ENCODE measurements at regions of chr13 and their contacts with region 1.

Region 1: GRCh38 chr13:95115525-95115924 is 185.7 kb downstream of the ABCC4 start:
- DNase-seq: no peak
- H3K4me3 ChIP-seq: peak overlapping the region in 1 of 3 experiments; percentile 13
- H3K27ac ChIP-seq: peak overlapping the region; percentile 65
- H3K4me1 ChIP-seq: peaks cover 43% of the 10 kb centered on the region
- H3K27me3 ChIP-seq: no peaks in the 10 kb centered on the region
- CTCF ChIP-seq: no peak
- POLR2A ChIP-seq: no peak

Region 2: DNA sequence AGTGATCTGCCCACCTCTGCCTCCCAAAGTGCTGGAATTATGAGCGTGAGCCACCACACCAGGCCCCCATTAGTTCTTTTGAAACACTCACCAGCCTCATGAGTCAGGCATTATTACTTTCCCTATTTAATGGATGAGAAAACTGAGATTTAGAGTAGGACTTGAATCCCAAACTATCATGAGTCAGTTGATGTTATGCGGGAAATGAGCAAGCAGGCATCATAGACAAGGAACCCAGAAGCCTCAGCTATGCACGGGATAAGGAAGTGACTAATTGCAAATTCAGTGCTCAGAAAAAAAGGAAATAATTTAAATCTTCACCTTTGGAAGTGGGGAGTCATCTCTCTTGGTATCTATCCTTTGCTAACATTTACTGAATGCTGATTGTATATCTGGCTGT is 31.8 kb before region 1 on chr13:
- CTCF ChIA-PET with region 1: no interaction called
- POLR2A ChIA-PET with region 1: no interaction called
- dilution Hi-C with region 1: no loop called
- intact Hi-C with region 1: loop called (anchors 2 kb)
- DNase-seq: peak; percentile 86
- H3K4me3 ChIP-seq: no peak overlapping the region
- H3K27ac ChIP-seq: peak overlapping the region; percentile 44
- H3K4me1 ChIP-seq: peaks cover 30% of the 10 kb centered on the region
- H3K27me3 ChIP-seq: no peaks in the 10 kb centered on the region
- CTCF ChIP-seq: no peak
- POLR2A ChIP-seq: no peak